CD14-positive monocyte (primary cell): ENCODE measurements at regions of chr14 and their contacts with region 1.

Region 1: GRCh38 chr14:81220830-81221578 is at the start of gene GTF2A1:
- DNase-seq: peak; percentile 95 to 97 (median 96)
- H3K4me3 ChIP-seq: peak within 1 kb of the TSS; percentile 96 to 98 (median 96)
- H3K4me3 Mint-ChIP-seq: peak within 1 kb of the TSS; percentile 97 to 99
- H3K27ac ChIP-seq: peak within 1 kb of the TSS; percentile 99 to 100
- H3K27ac Mint-ChIP-seq: peak within 1 kb of the TSS; percentile 98 to 100 (median 99)
- H3K4me1 ChIP-seq: peaks cover 27 to 28% of the 10 kb centered on the region in 2 donors
- H3K4me1 Mint-ChIP-seq: peaks cover 26% of the 10 kb centered on the region
- H3K27me3 ChIP-seq: no peaks in the 10 kb centered on the region
- H3K27me3 Mint-ChIP-seq: no peaks in the 10 kb centered on the region
- CTCF ChIP-seq: no peak
- polyA plus RNA-seq, gene GTF2A1: 7.9 to 15.8 (median 9.2) TPM

Region 2: GRCh38 chr14:80919622-80920021 is 301.4 kb before region 1 on chr14:
- intact Hi-C with region 1: no loop called
- DNase-seq: no peak
- H3K4me3 ChIP-seq: no peak overlapping the region
- H3K4me3 Mint-ChIP-seq: no peak overlapping the region
- H3K27ac ChIP-seq: no peak overlapping the region
- H3K27ac Mint-ChIP-seq: no peak overlapping the region
- H3K4me1 ChIP-seq: no peaks in the 10 kb centered on the region
- H3K4me1 Mint-ChIP-seq: no peaks in the 10 kb centered on the region
- H3K27me3 ChIP-seq: no peaks in the 10 kb centered on the region
- H3K27me3 Mint-ChIP-seq: peaks cover 0 to 2% (median 0%) of the 10 kb centered on the region in 3 donors
- CTCF ChIP-seq: no peak

Region 3: DNA sequence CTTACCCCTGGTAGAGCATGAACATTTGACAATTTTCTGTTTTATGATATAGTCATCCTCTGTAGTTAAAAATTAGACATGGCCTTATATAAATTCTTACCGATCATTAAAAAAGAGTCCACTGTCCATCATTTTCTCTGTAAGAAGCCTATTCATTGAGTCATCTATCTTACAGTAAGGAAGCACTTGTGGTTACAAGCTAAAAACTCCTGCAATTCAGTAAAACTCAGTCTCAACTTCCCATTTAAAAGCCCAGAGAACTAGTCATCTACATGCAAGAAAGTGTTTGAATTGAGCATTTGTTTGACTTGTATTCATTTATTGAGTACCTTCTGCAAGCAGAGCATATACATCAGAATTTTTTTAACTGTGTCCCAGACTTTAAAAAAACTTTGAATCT is 63.6 kb before region 1 on chr14:
- intact Hi-C with region 1: no loop called
- DNase-seq: peak; percentile 38 to 61 (median 54)
- H3K4me3 ChIP-seq: no peak overlapping the region
- H3K4me3 Mint-ChIP-seq: no peak overlapping the region
- H3K27ac ChIP-seq: peak overlapping the region in 1 of 2 donors; percentile 7
- H3K27ac Mint-ChIP-seq: peak overlapping the region in 2 of 7 donors; percentile 7 to 33
- H3K4me1 ChIP-seq: peaks cover 10 to 20% of the 10 kb centered on the region in 2 donors
- H3K4me1 Mint-ChIP-seq: peaks cover 22% of the 10 kb centered on the region
- H3K27me3 ChIP-seq: no peaks in the 10 kb centered on the region
- H3K27me3 Mint-ChIP-seq: peaks cover 0 to 2% (median 2%) of the 10 kb centered on the region in 3 donors
- CTCF ChIP-seq: no peak

Region 4: GRCh38 chr14:81170104-81170828 is 50.7 kb before region 1 on chr14:
- intact Hi-C with region 1: loop called (anchors 5 to 10 kb)
- DNase-seq: peak; percentile 75 to 84 (median 80)
- H3K4me3 ChIP-seq: peak overlapping the region; percentile 47 to 93 (median 76)
- H3K4me3 Mint-ChIP-seq: peak overlapping the region; percentile 87 to 95
- H3K27ac ChIP-seq: peak overlapping the region; percentile 90 to 94
- H3K27ac Mint-ChIP-seq: peak overlapping the region; percentile 95 to 99 (median 97)
- H3K4me1 ChIP-seq: peaks cover 13 to 14% of the 10 kb centered on the region in 2 donors
- H3K4me1 Mint-ChIP-seq: peaks cover 31% of the 10 kb centered on the region
- H3K27me3 ChIP-seq: no peaks in the 10 kb centered on the region
- H3K27me3 Mint-ChIP-seq: no peaks in the 10 kb centered on the region
- CTCF ChIP-seq: peak; percentile 82

Region 5: DNA sequence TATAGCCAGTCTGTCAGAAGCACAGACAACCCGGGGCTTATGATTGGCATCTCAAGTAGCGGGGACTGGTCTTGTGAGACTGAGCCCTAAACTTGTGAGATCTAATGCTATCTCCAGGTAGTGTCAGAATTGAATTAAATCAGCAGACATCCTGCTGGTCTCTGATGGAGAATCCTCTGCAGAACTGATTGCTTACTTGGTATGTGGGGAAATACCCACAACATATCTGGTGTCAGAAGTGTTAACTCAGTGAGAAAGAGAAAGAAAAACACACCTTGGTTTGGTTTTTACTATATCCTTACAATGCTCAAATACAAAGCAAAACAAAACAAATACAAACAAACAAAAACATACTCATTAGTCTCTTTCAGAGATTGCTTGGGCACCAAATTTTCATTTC is 302.6 kb after region 1 on chr14:
- intact Hi-C with region 1: no loop called
- DNase-seq: no peak
- H3K4me3 ChIP-seq: no peak overlapping the region
- H3K4me3 Mint-ChIP-seq: no peak overlapping the region
- H3K27ac ChIP-seq: no peak overlapping the region
- H3K27ac Mint-ChIP-seq: no peak overlapping the region
- H3K4me1 ChIP-seq: peaks cover 25 to 31% of the 10 kb centered on the region in 2 donors
- H3K4me1 Mint-ChIP-seq: peaks cover 29% of the 10 kb centered on the region
- H3K27me3 ChIP-seq: no peaks in the 10 kb centered on the region
- H3K27me3 Mint-ChIP-seq: peaks cover 0 to 2% (median 0%) of the 10 kb centered on the region in 3 donors
- CTCF ChIP-seq: no peak

Region 6: DNA sequence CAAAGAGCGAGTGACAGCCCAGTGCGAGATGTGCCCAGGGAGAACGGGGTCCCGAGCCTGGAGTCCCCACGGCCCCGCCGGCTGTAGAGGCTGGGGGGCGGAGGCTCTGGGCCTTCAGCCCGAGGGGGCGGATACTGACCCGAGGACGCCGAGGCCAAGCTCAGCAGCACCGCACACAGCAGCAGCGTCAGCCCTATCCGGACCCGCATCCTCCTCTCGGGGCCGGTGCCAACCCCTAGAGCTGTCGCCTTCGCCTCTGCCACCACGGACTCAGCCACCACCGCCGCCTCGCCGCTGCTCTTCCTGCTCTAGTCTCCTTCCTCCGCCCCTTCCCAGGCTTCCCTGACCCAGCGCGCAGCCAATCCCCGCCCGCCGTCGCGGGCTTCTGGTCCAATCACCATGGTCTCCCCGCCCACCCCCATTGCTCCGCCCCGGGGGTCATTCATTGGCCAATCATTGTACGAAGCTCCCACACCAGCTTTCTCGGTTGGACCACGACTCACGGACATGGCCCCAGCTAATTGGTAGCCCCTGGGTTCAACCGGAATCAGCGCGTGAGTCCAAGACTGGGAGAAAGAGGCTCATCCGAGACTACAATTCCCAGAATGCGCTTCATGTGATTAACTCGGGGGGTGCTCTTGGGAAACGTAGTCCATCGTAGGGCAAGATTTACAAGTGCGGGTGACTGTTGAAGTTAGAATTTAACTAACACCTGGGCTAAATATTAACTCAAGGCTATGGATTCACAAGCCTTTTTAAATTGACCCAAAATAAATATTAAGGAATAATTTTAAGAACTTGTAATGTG is 312.7 kb after region 1 on chr14 and contains the start of gene SEL1L:
- intact Hi-C with region 1: loop called in 1 of 2 experiments (anchors 5 kb)
- DNase-seq: peak; percentile 98 to 99 (median 99)
- H3K4me3 ChIP-seq: peak within 1 kb of the TSS; percentile 75 to 89 (median 88)
- H3K4me3 Mint-ChIP-seq: peak within 1 kb of the TSS; percentile 97
- H3K27ac ChIP-seq: peak within 1 kb of the TSS; percentile 50 to 84
- H3K27ac Mint-ChIP-seq: peak within 1 kb of the TSS; percentile 88 to 96 (median 95)
- H3K4me1 ChIP-seq: peaks cover 39 to 50% of the 10 kb centered on the region in 2 donors
- H3K4me1 Mint-ChIP-seq: peaks cover 50% of the 10 kb centered on the region
- H3K27me3 ChIP-seq: no peaks in the 10 kb centered on the region
- H3K27me3 Mint-ChIP-seq: no peaks in the 10 kb centered on the region
- CTCF ChIP-seq: no peak
- polyA plus RNA-seq, gene SEL1L: 14.4 to 48.4 (median 42.5) TPM